Activated CD4-positive, alpha-beta T cell treated with anti-CD3 and anti-CD28 coated beads for 36 hours (primary cell): ENCODE measurements at regions of chr6 and their contacts with region 1.

Region 1: DNA sequence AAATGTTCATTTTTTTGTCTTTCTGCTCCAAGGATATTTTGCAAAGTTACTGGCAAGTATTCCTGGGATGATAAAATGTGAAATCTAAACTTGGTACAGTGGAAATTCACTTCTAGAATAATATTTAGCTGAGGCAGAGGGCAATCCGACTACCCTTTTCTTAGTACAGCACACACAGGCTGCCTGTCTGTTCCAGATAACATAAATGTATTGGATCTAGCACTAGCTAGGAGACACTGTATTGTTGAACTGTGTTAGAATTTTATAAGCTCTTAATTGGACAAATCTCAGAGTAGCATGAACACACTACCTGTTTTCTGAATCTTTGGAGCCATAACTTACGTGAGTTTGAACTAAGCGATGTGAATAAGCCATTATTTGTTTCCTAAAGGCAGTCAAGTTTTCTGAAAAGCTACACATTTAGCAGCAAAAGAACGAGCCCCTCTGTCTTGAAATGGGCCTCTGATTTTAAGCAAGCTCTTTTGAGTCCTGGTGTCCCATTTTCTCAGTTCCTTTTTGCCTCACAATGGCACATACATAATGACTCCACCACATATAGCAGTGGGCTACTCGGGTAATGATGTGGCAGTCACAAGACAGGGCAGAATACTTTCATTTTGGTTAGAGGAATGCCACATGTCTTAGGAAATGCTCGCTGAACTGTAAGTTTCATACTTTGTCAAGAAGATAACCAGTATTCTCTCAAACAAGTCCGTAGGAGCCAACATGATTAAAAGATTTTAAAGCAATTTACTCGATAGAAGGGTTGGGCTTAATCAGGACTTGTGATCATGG is 116.5 kb upstream of the ESR1 start:
- DNase-seq: peak; percentile 57
- ATAC-seq: peak; percentile 94
- H3K4me3 Mint-ChIP-seq: peak overlapping the region; percentile 66
- H3K27ac Mint-ChIP-seq: peak overlapping the region; percentile 82
- H3K4me1 Mint-ChIP-seq: peaks cover 22% of the 10 kb centered on the region
- H3K27me3 Mint-ChIP-seq: peaks cover 8% of the 10 kb centered on the region

Region 2: DNA sequence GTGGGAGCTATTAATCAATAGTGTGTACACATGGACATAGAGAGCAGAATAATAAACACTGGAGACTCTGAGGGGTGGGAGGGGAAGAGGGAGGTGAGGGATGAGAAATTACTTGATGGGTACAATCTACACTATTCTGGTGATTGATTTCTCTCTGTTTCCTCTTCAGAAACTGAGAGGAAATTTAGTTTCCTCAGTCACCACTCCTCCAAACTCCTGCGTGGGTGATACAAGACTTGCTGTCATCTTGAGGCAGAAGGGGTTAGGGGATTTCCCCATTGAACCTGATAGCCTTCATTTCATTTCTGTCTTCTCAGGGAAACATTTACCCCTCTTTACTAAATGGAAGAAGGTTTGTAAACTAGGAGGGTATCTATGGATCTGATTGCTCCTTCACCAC is 32.2 kb after region 1 on chr6:
- CTCF ChIA-PET with region 1: no interaction called
- POLR2A ChIA-PET with region 1: no interaction called
- intact Hi-C with region 1: loop called in 1 of 2 experiments (anchors 1 kb)
- DNase-seq: peak; percentile 76
- ATAC-seq: peak; percentile 96
- H3K4me3 Mint-ChIP-seq: no peak overlapping the region
- H3K27ac Mint-ChIP-seq: peak overlapping the region; percentile 38
- H3K4me1 Mint-ChIP-seq: peaks cover 39% of the 10 kb centered on the region
- H3K27me3 Mint-ChIP-seq: peaks cover 12% of the 10 kb centered on the region

Region 3: DNA sequence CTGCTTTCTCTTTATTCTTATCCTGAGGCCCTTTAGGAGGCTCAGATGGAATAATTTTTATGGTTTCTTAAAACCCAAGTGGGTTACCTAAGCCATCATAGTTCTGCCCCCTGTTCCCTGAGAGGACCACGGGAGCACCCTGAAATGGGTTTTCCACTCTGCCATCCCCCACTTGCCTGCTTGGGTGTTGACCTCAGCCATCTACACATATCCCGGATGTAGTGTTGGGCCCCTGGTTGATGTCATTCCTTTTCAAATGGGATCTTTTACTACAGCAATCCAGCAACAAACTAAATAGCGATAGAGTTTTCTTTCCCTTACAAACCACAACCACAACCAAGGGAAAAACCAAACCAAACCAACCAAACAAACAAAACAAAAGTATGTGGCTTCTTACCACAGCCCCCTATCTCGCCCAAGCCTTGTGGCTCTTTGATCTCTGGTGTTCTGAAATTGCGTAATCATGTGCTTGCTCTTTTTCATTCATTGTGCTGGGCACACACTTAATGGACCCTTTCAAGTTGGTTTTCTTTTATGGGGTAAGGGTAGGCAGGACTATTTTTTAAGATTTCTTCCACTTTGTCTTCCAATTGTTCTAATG is 271.4 kb after region 1 on chr6:
- CTCF ChIA-PET with region 1: no interaction called
- POLR2A ChIA-PET with region 1: no interaction called
- intact Hi-C with region 1: loop called in 1 of 2 experiments (anchors 10 kb)
- DNase-seq: peak; percentile 16
- ATAC-seq: peak; percentile 72
- H3K4me3 Mint-ChIP-seq: no peak overlapping the region
- H3K27ac Mint-ChIP-seq: no peak overlapping the region
- H3K4me1 Mint-ChIP-seq: peaks cover 18% of the 10 kb centered on the region
- H3K27me3 Mint-ChIP-seq: peaks cover 27% of the 10 kb centered on the region

Region 4: DNA sequence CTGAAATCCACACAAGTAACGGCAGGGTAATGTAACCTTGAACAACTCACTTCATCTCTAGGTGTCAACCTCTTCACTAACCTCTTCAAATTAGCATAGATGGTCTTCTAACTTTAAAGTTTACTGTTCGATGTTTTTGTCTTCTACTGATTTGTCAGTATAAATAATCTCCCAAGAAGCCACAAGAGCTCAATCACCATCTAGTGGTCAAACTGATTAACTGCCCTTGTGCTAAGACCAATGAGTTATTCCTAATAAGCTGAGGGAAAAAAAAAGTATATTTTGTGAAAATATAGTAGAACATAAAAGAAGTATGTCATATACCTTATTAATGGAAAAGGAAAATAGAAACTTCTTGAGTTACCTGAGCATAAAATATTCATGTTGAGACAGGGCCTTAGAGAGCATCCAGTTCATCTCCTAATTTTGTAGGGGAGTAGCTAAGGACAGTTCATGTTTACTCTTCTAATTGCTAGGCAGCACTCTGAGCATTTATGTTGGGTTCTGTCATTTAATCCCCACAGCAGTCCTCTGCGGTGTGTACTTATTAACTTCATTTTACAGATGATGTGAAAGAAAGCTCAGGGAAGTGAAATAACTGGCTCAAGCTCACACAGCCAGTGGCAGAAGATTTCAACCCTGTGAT is 433.6 kb after region 1 on chr6:
- CTCF ChIA-PET with region 1: interaction called, 3 read pairs
- POLR2A ChIA-PET with region 1: no interaction called
- intact Hi-C with region 1: loop called (anchors 2 to 5 kb)
- DNase-seq: no peak
- ATAC-seq: peak; percentile 49
- H3K4me3 Mint-ChIP-seq: no peak overlapping the region
- H3K27ac Mint-ChIP-seq: no peak overlapping the region
- H3K4me1 Mint-ChIP-seq: no peaks in the 10 kb centered on the region
- H3K27me3 Mint-ChIP-seq: no peaks in the 10 kb centered on the region